Breast epithelium (tissue), 4 donors: ENCODE measurements at regions of chr4 and their contacts with region 1.

Region 1: GRCh38 chr4:18456186-18456585 is 434.6 kb upstream of the LCORL start:
- DNase-seq: no peak
- H3K4me3 ChIP-seq: no peak overlapping the region
- H3K27ac ChIP-seq: no peak overlapping the region
- H3K4me1 ChIP-seq: no peaks in the 10 kb centered on the region
- H3K27me3 ChIP-seq: no peaks in the 10 kb centered on the region
- CTCF ChIP-seq: no peak
- POLR2A ChIP-seq: no peak

Region 2: DNA sequence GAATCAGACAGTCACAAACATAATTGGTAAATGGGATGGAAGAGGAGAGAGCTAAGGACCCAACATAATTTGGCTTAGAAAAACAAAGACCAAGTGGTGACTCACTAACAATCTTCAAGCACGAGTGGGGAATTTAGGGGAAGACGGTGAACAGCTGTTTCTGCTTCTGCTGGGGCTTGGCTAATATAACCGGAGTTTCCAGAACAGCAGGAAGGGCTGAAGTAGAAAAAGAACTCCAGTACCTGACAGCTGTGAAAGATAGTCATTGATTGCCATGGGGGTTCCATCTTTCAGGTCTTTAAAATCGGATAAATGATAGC is 1266.8 kb before region 1 on chr4:
- intact Hi-C with region 1: no loop called
- DNase-seq: no peak
- H3K4me3 ChIP-seq: no peak overlapping the region
- H3K27ac ChIP-seq: peak overlapping the region; percentile 24 to 72
- H3K4me1 ChIP-seq: no peaks in the 10 kb centered on the region
- H3K27me3 ChIP-seq: no peaks in the 10 kb centered on the region
- CTCF ChIP-seq: no peak
- POLR2A ChIP-seq: no peak

Region 3: GRCh38 chr4:17427991-17428390 is 1028.2 kb before region 1 on chr4:
- intact Hi-C with region 1: loop called (anchors 5 kb)
- DNase-seq: no peak
- H3K4me3 ChIP-seq: no peak overlapping the region
- H3K27ac ChIP-seq: no peak overlapping the region
- H3K4me1 ChIP-seq: no peaks in the 10 kb centered on the region
- H3K27me3 ChIP-seq: no peaks in the 10 kb centered on the region
- CTCF ChIP-seq: no peak
- POLR2A ChIP-seq: no peak

Region 4: GRCh38 chr4:17647927-17648326 is 808.3 kb before region 1 on chr4:
- intact Hi-C with region 1: no loop called
- DNase-seq: no peak
- H3K4me3 ChIP-seq: no peak overlapping the region
- H3K27ac ChIP-seq: no peak overlapping the region
- H3K4me1 ChIP-seq: no peaks in the 10 kb centered on the region
- H3K27me3 ChIP-seq: no peaks in the 10 kb centered on the region
- CTCF ChIP-seq: no peak
- POLR2A ChIP-seq: no peak